ENCODE measurements at regions of chr15 and their contacts with region 1.

Region 1: DNA sequence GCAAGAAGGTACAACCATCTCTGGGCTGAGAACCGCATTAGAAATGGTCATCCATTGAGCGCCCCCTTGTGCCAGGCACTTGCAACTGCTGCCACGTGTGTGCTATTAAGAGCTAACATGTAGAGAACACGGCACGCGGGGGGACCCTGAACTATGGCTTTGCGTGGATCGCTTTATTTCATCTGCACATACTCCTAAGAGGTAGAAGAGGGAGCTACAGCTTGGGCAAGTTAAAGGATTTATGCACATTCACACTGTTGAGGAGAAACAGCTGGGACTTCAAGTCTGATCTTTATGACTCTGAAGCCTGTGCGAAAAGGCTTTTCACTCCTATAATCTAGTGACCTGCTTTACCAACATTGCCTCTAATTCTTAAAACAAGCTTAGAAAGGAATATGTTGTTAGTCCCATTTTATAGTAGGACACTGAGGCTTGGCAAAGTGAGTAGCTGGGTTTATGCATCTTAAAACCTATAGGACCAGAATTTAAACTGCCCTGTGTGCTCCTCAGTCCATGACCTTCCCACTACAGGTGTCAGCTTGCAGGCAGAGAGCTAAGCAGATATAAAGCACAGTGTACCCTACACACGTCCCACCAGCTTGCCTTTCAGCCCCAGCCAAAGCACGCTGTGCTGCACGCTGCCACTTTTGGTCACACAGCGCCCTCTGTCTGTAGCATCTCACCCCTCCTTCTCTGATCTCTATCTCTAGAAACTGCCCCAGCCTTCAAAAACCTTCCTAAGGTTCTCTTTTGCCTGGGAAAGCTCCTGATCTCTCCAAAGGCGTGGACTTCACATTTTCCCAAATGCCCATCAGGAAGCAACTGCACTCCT is 57.8 kb downstream of the STARD5 start:
- DNase-seq: peak; percentile 84
- ATAC-seq: peak; percentile 89
- H3K4me3 ChIP-seq: peak overlapping the region in 4 of 5 experiments; percentile 8 to 53 (median 29)
- H3K4me3 Mint-ChIP-seq: peak overlapping the region; percentile 84
- H3K27ac ChIP-seq: no peak overlapping the region
- H3K27ac Mint-ChIP-seq: no peak overlapping the region
- H3K4me1 ChIP-seq: peaks cover 14 to 20% of the 10 kb centered on the region in 2 donors
- H3K4me1 Mint-ChIP-seq: peaks cover 21% of the 10 kb centered on the region
- H3K27me3 ChIP-seq: no peaks in the 10 kb centered on the region
- H3K27me3 Mint-ChIP-seq: no peaks in the 10 kb centered on the region
- CTCF ChIP-seq: peak; percentile 88

Region 2: DNA sequence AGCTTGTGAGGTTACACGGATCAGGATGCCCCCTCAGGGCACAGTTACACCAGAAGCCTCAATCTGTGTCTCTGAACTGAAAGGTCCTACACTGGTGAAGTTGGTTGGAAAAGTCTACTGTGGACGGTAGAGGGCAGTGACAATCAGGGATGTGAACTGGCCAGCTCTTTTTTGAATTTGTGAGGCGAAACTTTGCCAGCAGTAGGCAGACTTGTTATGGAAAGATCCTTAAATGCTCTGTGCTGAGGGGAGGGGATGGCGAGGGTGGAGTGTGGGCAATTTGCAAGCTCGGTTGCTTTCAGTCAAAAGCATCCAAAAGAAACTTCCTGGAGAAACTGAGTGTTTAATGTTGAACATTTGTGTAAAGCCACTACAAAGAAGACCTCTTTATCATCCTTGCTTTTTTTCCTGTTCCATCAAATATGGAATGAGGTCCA is 698.4 kb before region 1 on chr15:
- CTCF ChIA-PET with region 1: interaction called, 13 read pairs
- POLR2A ChIA-PET with region 1: no interaction called
- intact Hi-C with region 1: no loop called
- DNase-seq: peak; percentile 18
- ATAC-seq: no peak
- H3K4me3 ChIP-seq: no peak overlapping the region
- H3K4me3 Mint-ChIP-seq: no peak overlapping the region
- H3K27ac ChIP-seq: no peak overlapping the region
- H3K27ac Mint-ChIP-seq: no peak overlapping the region
- H3K4me1 ChIP-seq: no peaks in the 10 kb centered on the region
- H3K4me1 Mint-ChIP-seq: no peaks in the 10 kb centered on the region
- H3K27me3 ChIP-seq: peaks cover 0 to 3% (median 0%) of the 10 kb centered on the region in 4 experiments
- H3K27me3 Mint-ChIP-seq: peaks cover 43% of the 10 kb centered on the region
- CTCF ChIP-seq: peak; percentile 15

Region 3: DNA sequence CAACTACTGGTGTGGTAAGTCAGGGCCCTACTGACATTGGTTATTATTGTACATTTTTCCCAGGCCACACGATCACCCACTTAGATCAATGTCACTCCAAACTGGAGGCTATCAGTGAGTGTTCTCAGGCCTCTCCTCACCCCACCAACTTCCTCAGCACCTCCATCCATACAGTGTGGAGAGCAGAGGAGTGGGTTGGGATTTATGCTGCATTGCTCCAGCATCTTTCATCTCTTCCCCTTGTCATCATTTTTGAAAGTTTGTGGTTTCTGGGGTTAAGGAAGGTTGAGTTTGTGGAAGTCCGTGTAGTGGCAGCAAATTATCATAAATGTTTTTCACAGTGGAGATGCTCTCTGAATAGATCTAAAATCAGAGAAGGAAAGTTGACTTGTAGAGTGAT is 205.3 kb before region 1 on chr15:
- CTCF ChIA-PET with region 1: no interaction called
- POLR2A ChIA-PET with region 1: no interaction called
- intact Hi-C with region 1: no loop called
- DNase-seq: no peak
- ATAC-seq: no peak
- H3K4me3 ChIP-seq: no peak overlapping the region
- H3K4me3 Mint-ChIP-seq: no peak overlapping the region
- H3K27ac ChIP-seq: no peak overlapping the region
- H3K27ac Mint-ChIP-seq: no peak overlapping the region
- H3K4me1 ChIP-seq: no peaks in the 10 kb centered on the region
- H3K4me1 Mint-ChIP-seq: no peaks in the 10 kb centered on the region
- H3K27me3 ChIP-seq: no peaks in the 10 kb centered on the region
- H3K27me3 Mint-ChIP-seq: peaks cover 21% of the 10 kb centered on the region
- CTCF ChIP-seq: no peak

Region 4: DNA sequence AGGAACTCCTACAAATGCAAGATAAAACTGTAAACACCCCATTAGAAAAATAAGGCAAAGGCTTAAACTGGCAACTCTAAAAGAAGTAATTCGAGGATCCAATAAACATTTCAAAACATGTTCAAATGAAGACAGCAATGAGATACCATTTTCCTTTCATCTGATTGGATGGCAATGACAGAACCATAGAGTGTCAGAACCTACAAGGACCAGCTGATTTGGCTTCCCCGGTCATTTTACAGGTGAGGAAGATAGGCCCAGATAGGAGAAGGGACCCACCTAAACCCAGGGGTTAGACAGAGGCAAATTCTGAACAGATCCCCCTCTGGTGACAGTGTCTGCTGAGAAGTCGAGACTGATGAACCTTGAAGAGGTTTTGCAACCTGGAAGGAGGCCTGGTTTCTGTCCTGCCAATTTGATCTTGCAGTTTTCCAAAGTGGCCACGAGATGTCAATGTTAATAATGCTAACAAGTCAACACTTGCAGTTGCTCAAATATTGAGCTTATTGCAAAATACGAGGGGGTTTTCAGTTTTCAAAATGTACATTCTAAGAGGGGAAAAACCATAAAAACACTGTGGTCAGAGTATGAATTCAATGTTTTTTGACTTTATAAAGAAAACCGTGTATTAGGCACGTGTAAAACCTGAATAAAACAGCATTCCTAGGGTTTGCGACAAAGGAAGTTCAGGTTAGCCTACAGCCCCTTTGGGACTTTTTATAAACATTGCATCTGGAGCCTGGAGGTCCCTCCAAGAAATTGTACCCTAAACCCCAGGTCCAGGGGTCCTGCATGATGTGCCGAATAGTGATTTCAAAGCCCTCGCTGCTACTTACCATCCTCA is 110.6 kb before region 1 on chr15:
- CTCF ChIA-PET with region 1: interaction called, 117 read pairs
- POLR2A ChIA-PET with region 1: no interaction called
- intact Hi-C with region 1: loop called (anchors 1 kb)
- DNase-seq: peak; percentile 43
- ATAC-seq: no peak
- H3K4me3 ChIP-seq: no peak overlapping the region
- H3K4me3 Mint-ChIP-seq: no peak overlapping the region
- H3K27ac ChIP-seq: no peak overlapping the region
- H3K27ac Mint-ChIP-seq: no peak overlapping the region
- H3K4me1 ChIP-seq: no peaks in the 10 kb centered on the region
- H3K4me1 Mint-ChIP-seq: no peaks in the 10 kb centered on the region
- H3K27me3 ChIP-seq: no peaks in the 10 kb centered on the region
- H3K27me3 Mint-ChIP-seq: peaks cover 6% of the 10 kb centered on the region
- CTCF ChIP-seq: peak; percentile 48

Region 5: GRCh38 chr15:81296673-81297072 is 30.5 kb after region 1 on chr15:
- CTCF ChIA-PET with region 1: interaction called, 146 read pairs
- POLR2A ChIA-PET with region 1: no interaction called
- intact Hi-C with region 1: no loop called
- DNase-seq: peak; percentile 89
- ATAC-seq: peak; percentile 39
- H3K4me3 ChIP-seq: peak overlapping the region; percentile 79 to 100 (median 87)
- H3K4me3 Mint-ChIP-seq: peak overlapping the region; percentile 100
- H3K27ac ChIP-seq: peak overlapping the region; percentile 95 to 98
- H3K27ac Mint-ChIP-seq: peak overlapping the region; percentile 98
- H3K4me1 ChIP-seq: peaks cover 54 to 86% of the 10 kb centered on the region in 2 donors
- H3K4me1 Mint-ChIP-seq: peaks cover 92% of the 10 kb centered on the region
- H3K27me3 ChIP-seq: no peaks in the 10 kb centered on the region
- H3K27me3 Mint-ChIP-seq: no peaks in the 10 kb centered on the region
- CTCF ChIP-seq: no peak

Region 6: GRCh38 chr15:81323944-81324881 is 58.1 kb after region 1 on chr15 and contains the start of gene STARD5:
- CTCF ChIA-PET with region 1: interaction called, 26 read pairs
- POLR2A ChIA-PET with region 1: no interaction called
- intact Hi-C with region 1: no loop called
- DNase-seq: peak; percentile 92
- ATAC-seq: peak; percentile 99
- H3K4me3 ChIP-seq: peak within 1 kb of the TSS; percentile 54 to 79 (median 77)
- H3K4me3 Mint-ChIP-seq: peak within 1 kb of the TSS; percentile 100
- H3K27ac ChIP-seq: peak within 1 kb of the TSS; percentile 27 to 68
- H3K27ac Mint-ChIP-seq: peak within 1 kb of the TSS; percentile 95
- H3K4me1 ChIP-seq: peaks cover 18 to 32% of the 10 kb centered on the region in 2 donors
- H3K4me1 Mint-ChIP-seq: peaks cover 32% of the 10 kb centered on the region
- H3K27me3 ChIP-seq: no peaks in the 10 kb centered on the region
- H3K27me3 Mint-ChIP-seq: no peaks in the 10 kb centered on the region
- CTCF ChIP-seq: no peak
- total RNA-seq, gene STARD5: 15.7 and 17.2 TPM in 2 replicates

Region 7: GRCh38 chr15:81386947-81387346 is 120.8 kb after region 1 on chr15:
- CTCF ChIA-PET with region 1: interaction called, 13 read pairs
- POLR2A ChIA-PET with region 1: no interaction called
- intact Hi-C with region 1: no loop called
- DNase-seq: no peak
- ATAC-seq: no peak
- H3K4me3 ChIP-seq: no peak overlapping the region
- H3K4me3 Mint-ChIP-seq: no peak overlapping the region
- H3K27ac ChIP-seq: no peak overlapping the region
- H3K27ac Mint-ChIP-seq: no peak overlapping the region
- H3K4me1 ChIP-seq: no peaks in the 10 kb centered on the region
- H3K4me1 Mint-ChIP-seq: no peaks in the 10 kb centered on the region
- H3K27me3 ChIP-seq: no peaks in the 10 kb centered on the region
- H3K27me3 Mint-ChIP-seq: no peaks in the 10 kb centered on the region
- CTCF ChIP-seq: no peak

Region 8: DNA sequence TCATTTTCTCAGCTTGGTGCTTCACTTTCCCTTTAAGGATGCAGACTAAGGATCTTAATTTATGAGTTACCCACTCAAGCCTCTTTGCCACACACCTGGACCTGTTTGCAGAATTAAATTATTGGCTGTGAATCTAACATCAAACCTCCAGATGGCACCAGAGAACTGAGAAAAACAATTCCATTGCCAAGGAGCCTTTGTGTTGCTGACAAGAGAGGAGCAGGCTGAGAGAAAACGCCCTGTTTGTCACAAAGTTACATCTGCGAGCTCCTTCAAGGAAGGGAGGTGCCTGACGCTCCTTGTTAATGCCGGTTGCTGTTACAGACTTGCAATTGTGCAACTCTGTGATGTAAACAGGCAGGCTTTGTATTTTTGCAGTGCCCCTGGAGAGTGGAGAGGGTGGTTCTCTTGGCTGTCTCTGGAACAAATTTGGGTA is 144.2 kb after region 1 on chr15:
- CTCF ChIA-PET with region 1: interaction called, 19 read pairs
- POLR2A ChIA-PET with region 1: no interaction called
- intact Hi-C with region 1: no loop called
- DNase-seq: peak; percentile 47
- ATAC-seq: no peak
- H3K4me3 ChIP-seq: no peak overlapping the region
- H3K4me3 Mint-ChIP-seq: no peak overlapping the region
- H3K27ac ChIP-seq: no peak overlapping the region
- H3K27ac Mint-ChIP-seq: no peak overlapping the region
- H3K4me1 ChIP-seq: peaks cover 0 to 4% of the 10 kb centered on the region in 2 donors
- H3K4me1 Mint-ChIP-seq: peaks cover 5% of the 10 kb centered on the region
- H3K27me3 ChIP-seq: peaks cover 0 to 10% (median 0%) of the 10 kb centered on the region in 4 experiments
- H3K27me3 Mint-ChIP-seq: peaks cover 27% of the 10 kb centered on the region
- CTCF ChIP-seq: peak; percentile 59